GM13977 (cell line): ENCODE measurements at regions of chr2 and their contacts with region 1.

Region 1: GRCh38 chr2:16784652-16785051 is 119.0 kb upstream of the CYRIA start:
- DNase-seq: no peak
- CTCF ChIP-seq: no peak

Region 2: GRCh38 chr2:16318474-16319195 is 466.0 kb before region 1 on chr2:
- in situ Hi-C with region 1: no loop called
- DNase-seq: no peak
- CTCF ChIP-seq: no peak

Region 3: GRCh38 chr2:16890081-16890480 is 105.4 kb after region 1 on chr2:
- in situ Hi-C with region 1: loop called (anchors 10 kb)
- DNase-seq: no peak
- CTCF ChIP-seq: no peak